Natural killer cell (primary cell): ENCODE measurements at regions of chr6 and their contacts with region 1.

Region 1: GRCh38 chr6:33200219-33201146 is at the starts of genes RXRB and SLC39A7:
- DNase-seq: peak; percentile 93 to 100
- ATAC-seq: peak; percentile 76 to 89 (median 78)
- H3K4me3 ChIP-seq: peak within 1 kb of the TSS; percentile 99
- H3K4me3 Mint-ChIP-seq: peak within 1 kb of the TSS; percentile 99
- H3K27ac ChIP-seq: peak within 1 kb of the TSS; percentile 99
- H3K27ac Mint-ChIP-seq: peak within 1 kb of the TSS; percentile 98
- H3K4me1 ChIP-seq: peaks cover 44% of the 10 kb centered on the region
- H3K4me1 Mint-ChIP-seq: peaks cover 72 to 93% of the 10 kb centered on the region in 2 donors
- H3K27me3 ChIP-seq: no peaks in the 10 kb centered on the region
- H3K27me3 Mint-ChIP-seq: no peaks in the 10 kb centered on the region
- CTCF ChIP-seq: no peak
- total RNA-seq, gene RXRB: 72.3 to 96.4 (median 73.9) TPM
- total RNA-seq, gene SLC39A7: 38.9 to 45.7 (median 45.6) TPM

Region 2: DNA sequence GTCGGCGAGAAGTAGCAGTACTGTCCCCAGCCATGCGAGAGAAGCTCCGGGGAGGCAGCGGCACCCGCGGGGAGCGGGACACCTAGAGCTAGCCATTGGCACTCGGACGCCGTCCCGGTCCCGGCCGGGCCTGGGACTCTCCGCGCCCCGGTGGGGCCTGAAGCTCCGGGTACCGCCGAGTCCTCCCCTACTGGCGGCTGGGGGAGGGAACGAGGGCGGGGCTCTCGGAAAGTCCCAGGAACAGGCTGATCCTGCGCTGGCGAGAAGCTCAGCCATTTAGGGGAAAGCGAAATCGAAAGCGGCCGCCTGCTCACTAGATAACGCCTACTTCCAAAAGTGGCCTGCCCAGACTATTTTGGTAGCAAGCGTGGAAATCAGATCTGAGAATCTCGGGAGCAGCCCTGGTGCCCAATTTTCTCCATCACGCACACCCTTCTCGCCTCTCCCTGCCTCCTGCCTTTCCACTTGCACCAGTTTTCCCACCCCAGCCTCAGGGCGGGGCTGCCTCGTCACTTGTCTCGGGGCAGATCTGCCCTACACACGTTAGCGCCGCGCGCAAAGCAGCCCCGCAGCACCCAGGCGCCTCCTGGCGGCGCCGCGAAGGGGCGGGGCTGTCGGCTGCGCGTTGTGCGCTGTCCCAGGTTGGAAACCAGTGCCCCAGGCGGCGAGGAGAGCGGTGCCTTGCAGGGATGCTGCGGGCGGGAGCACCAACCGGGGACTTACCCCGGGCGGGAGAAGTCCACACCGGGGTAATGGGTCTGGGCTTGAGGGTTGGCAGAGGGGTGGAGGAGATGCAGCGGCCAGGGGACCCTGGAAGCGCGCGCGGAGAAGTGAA is 346.7 kb before region 1 on chr6 and contains the starts of genes PSMB9 and TAP1:
- intact Hi-C with region 1: loop called (anchors 5 kb)
- DNase-seq: peak; percentile 90 to 98
- ATAC-seq: peak; percentile 76 to 92 (median 80)
- H3K4me3 ChIP-seq: peak within 1 kb of the TSS; percentile 95
- H3K4me3 Mint-ChIP-seq: peak within 1 kb of the TSS; percentile 99
- H3K27ac ChIP-seq: peak within 1 kb of the TSS; percentile 99
- H3K27ac Mint-ChIP-seq: peak within 1 kb of the TSS; percentile 100
- H3K4me1 ChIP-seq: peaks cover 65% of the 10 kb centered on the region
- H3K4me1 Mint-ChIP-seq: peaks cover 73 to 84% of the 10 kb centered on the region in 2 donors
- H3K27me3 ChIP-seq: no peaks in the 10 kb centered on the region
- H3K27me3 Mint-ChIP-seq: no peaks in the 10 kb centered on the region
- CTCF ChIP-seq: peak; percentile 78
- total RNA-seq, gene PSMB9: 112 to 190 (median 182) TPM
- total RNA-seq, gene TAP1: 134 to 193 (median 179) TPM

Region 3: DNA sequence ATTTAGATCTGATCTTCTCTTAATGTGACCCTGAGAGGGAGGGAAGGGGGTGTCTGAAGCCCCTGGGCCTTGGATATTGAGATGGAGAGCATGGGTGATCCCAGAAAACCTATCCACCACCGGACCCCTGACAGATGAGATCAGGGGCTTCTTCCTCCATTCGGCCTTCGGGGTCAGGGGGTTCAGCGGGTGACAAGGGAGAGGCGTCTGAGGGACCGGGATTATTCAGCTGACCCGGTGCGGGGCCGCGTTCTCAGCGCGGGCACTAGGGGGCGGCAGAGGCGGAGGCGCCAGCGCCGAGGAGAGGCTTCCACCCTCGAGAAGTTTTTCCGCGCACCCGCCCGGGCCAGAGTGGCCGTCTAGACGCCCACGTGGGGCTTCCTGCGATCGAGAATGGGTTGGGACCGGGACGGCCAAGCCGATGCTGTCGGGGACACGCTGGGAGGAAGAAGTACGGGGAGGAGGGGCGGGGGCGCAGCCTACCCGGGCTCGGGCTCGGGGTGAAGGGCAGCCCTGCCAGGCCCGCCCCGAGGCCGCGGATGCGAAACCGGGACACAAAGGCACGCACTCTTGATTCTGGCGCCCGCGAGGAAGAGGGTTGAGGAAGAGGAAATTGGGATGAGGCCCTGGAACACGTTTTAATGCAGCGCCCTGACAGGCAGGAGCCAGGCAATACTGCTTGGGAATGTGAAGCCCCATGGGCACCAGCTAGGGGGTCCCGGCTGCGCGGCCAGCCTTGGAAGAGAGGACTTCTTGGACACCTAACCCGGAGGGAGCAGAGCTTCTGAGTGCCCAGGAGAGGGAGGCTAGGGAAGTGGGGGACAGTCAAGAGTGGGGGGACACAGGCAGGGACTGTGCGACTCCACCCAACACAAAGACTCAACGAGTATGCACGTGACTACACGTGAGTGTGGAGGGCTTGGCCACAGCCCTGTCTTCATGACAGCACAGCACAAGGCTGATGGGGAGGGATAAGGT is 38.8 kb before region 1 on chr6:
- intact Hi-C with region 1: loop called (anchors 1 kb)
- DNase-seq: peak; percentile 84 to 87
- ATAC-seq: peak; percentile 93 to 99 (median 99)
- H3K4me3 ChIP-seq: peak overlapping the region; percentile 44
- H3K4me3 Mint-ChIP-seq: peak overlapping the region; percentile 94
- H3K27ac ChIP-seq: no peak overlapping the region
- H3K27ac Mint-ChIP-seq: peak overlapping the region in 1 of 2 donors; percentile 90
- H3K4me1 ChIP-seq: peaks cover 12% of the 10 kb centered on the region
- H3K4me1 Mint-ChIP-seq: peaks cover 10 to 12% of the 10 kb centered on the region in 2 donors
- H3K27me3 ChIP-seq: no peaks in the 10 kb centered on the region
- H3K27me3 Mint-ChIP-seq: peaks cover 0 to 9% of the 10 kb centered on the region in 2 donors
- CTCF ChIP-seq: peak; percentile 89

Region 4: DNA sequence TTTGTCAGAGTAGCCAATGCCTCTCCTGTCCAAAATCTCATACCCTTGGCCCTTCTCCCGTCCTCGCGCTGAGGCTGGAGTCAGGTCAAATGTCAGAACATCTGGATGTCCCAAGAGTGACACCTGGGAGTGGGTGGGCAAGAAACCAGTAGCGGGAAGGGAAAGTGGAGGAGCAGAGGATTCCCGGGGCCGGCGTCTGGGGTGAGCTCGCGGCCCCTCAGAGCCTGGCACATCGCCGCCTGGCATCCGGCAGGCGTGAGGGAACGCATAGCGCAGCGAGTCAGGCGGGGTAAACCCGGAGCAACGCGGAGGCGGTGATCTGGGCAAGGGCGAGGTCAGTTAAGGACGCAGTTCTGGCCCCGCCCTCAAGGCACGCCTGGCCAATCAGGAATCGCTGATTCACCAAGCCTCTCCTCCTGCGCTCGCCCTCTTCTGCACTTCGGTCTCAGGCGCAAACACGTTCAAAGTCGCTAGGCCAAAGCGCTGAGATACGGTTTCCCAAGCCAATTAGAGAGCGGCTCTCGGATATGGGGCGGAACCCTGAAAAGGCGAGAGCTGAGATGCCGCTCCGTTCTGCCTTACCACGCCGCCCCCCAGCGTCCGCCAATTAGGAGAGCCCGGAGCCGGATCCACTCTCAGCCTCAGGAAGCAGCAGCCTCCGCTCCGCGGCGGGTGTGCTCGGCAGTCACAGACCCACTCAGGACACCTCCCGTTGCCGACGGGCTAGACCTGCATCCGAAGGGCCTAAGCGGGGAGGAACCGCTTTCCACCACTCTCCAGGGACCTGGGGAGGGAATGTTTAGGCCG is 48.6 kb after region 1 on chr6:
- intact Hi-C with region 1: loop called (anchors 1 kb)
- DNase-seq: peak; percentile 96 to 99
- ATAC-seq: peak; percentile 86 to 96 (median 88)
- H3K4me3 ChIP-seq: peak overlapping the region; percentile 68
- H3K4me3 Mint-ChIP-seq: peak overlapping the region; percentile 90
- H3K27ac ChIP-seq: peak overlapping the region; percentile 94
- H3K27ac Mint-ChIP-seq: peak overlapping the region; percentile 95 to 97
- H3K4me1 ChIP-seq: peaks cover 28% of the 10 kb centered on the region
- H3K4me1 Mint-ChIP-seq: peaks cover 22 to 37% of the 10 kb centered on the region in 2 donors
- H3K27me3 ChIP-seq: no peaks in the 10 kb centered on the region
- H3K27me3 Mint-ChIP-seq: peaks cover 0 to under 1% of the 10 kb centered on the region in 2 donors
- CTCF ChIP-seq: no peak

Region 5: DNA sequence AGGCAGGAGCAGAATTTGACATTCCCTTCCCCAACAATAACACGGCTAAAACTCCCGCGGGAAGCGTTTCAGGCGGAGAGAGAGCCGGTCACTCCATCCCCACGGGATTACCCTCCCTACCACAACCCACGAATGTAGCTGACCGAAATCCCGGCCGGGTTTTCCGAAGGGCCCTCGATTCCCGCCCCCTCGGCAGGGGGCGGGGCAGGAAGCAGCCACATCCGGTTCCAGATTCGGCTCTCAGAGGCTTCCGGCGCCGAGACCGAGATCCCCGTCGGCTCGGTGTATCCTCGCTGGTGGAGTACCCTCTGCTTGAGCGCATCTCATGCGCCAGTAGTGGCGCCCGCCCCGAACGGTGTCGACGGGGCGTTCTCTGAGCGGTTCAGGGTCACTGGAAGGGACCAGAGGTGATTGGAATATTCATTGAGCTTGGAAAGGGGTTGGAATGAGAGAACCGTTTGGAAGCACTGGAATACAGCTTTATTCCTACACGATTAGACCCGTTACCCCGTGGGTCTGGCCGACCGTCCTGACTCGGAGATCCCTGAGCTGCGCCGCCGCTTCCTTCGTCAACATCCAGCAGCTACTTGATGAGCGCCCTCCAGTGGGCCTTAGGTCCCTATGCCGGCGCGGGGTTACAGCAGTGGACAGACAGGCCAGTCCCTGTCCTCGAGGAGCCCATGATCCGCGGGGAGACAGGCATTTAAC is 98.9 kb after region 1 on chr6:
- intact Hi-C with region 1: loop called (anchors 2 kb)
- DNase-seq: peak; percentile 91 to 97
- ATAC-seq: peak; percentile 74 to 88 (median 79)
- H3K4me3 ChIP-seq: peak overlapping the region; percentile 81
- H3K4me3 Mint-ChIP-seq: peak overlapping the region; percentile 99
- H3K27ac ChIP-seq: peak overlapping the region; percentile 88
- H3K27ac Mint-ChIP-seq: peak overlapping the region; percentile 99
- H3K4me1 ChIP-seq: peaks cover 34% of the 10 kb centered on the region
- H3K4me1 Mint-ChIP-seq: peaks cover 36 to 63% of the 10 kb centered on the region in 2 donors
- H3K27me3 ChIP-seq: no peaks in the 10 kb centered on the region
- H3K27me3 Mint-ChIP-seq: no peaks in the 10 kb centered on the region
- CTCF ChIP-seq: peak; percentile 64

Region 6: DNA sequence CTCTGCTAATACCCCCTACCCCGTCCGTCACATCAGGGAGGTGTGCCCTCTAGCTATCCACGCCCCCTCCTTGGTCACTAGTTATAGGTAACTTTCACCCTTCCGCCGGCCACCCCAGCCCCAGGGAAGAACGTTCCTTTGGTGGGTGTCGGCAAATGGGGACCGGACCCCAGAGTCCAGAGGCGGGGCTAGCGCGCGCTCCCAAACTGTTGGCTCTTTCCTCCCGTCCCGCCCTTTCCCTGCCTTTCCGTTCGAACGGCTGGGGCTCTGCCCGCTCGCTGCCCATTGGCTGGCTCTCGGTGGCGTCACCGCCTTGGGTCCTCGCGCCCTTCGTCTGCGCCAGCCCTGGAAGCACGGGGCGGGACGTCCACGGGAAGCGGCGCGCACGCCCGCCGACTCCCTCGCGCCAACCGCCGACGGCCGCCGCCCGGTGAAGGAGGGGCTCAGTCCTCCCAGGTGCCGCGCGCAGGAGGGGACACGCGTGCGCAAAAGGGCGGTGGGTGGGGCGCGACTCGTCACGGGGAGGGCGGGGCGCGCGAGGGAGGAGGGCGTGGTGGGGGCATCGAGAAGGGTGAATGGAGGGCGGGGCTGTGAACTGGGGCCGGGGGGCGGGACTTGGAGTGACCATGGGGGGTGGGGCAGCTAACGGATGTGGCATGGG is 209.7 kb after region 1 on chr6:
- intact Hi-C with region 1: loop called (anchors 5 kb)
- DNase-seq: peak; percentile 95 to 98
- ATAC-seq: peak; percentile 69 to 86 (median 74)
- H3K4me3 ChIP-seq: peak overlapping the region; percentile 84
- H3K4me3 Mint-ChIP-seq: peak overlapping the region; percentile 92
- H3K27ac ChIP-seq: peak overlapping the region; percentile 98
- H3K27ac Mint-ChIP-seq: peak overlapping the region; percentile 100
- H3K4me1 ChIP-seq: peaks cover 54% of the 10 kb centered on the region
- H3K4me1 Mint-ChIP-seq: peaks cover 38 to 48% of the 10 kb centered on the region in 2 donors
- H3K27me3 ChIP-seq: no peaks in the 10 kb centered on the region
- H3K27me3 Mint-ChIP-seq: no peaks in the 10 kb centered on the region
- CTCF ChIP-seq: no peak